Left ventricle myocardium superior (tissue), 1 donor: ENCODE measurements at regions of chr14 and their contacts with region 1.

Region 1: DNA sequence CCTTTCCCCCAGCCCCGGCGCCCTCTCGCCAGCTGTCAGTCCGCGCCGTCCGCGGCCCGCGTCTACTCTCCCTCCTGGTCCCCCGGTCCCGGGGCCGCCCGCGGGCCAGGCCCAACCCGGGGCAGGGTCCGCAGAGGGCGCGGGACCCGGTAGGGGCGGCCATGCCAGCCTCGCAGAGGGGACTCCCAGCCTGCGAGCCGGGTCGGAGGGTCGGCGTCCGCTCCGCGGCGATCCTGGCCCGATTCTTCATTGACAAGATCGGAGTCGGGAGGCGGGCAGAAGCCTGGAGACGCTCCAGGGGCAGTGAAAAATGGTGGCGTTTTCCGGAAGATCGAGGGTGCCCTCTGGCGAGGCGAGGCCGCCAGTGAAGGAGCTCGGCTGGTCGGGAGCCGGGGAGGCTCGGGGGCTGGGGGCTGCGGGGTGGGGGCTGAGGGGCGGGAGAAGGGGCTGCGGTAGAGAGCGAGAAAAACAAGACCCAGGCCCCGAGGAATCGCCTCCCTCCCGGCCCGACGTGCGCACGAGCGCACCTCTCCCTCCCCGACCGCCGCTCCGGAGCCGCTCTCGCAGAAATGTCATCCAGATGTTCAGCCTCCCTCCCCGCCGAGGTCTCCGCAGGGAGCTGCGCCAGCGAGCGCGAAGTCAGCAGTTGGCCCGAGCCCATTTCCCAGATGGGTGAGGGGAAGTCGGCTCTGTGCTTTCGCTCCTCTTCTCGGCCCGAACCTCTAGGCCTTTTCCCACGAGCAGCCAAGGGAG is 647 bp upstream of the TGFB3 start:
- DNase-seq: peak; percentile 89
- ATAC-seq: peak; percentile 75

Region 2: DNA sequence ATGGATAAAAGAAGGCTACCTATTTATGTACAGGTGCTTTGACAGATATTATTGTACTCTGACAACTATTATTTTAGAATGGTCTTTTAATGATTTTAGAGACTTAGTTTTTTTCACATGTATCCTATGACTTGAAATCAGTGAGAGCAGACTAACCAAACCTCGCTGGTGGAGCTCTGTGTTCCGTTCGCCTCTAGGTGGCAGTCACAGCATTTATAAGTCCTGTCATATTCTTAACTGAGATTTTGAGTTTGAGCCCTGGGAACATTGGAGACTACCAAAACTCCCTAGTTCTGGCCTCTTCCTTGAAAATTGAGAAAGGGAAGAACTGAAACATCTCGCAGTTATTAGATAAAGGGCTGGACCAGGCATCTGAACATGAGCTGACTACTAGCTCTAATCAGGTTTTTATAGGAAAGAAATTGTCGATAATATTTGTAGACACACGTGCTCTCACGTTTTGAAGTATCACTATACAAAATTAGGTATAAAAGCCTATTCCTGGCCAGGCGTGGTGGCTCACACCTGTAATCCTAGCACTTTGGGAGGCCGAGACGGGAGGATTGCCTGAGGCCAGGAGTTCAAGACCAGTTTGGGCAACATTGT is 273.1 kb before region 1 on chr14:
- intact Hi-C with region 1: loop called (anchors 5 kb)
- DNase-seq: peak; percentile 73
- ATAC-seq: peak; percentile 69

Region 3: DNA sequence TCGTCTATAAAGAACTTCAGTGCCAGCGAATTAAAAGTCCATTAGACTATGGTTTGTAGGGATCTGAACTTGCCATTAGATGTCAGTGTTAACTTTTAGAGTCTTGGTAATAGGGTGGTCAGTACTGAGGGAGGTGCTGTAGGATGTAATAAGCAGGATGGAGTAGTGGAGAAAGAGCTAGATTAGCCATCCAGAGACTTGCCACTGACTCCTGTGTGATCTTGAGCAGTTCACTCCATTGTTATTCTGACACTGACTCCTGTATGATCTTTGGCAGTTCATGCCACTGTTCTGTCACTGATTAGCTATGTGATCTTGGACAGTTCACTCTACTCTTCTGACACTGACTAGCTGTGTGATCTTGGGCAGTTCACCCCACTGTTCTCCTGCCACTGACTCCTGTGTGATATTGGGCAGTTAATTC is 187.8 kb before region 1 on chr14:
- intact Hi-C with region 1: loop called (anchors 10 kb)
- DNase-seq: no peak
- ATAC-seq: peak; percentile 96

Region 4: GRCh38 chr14:75906676-75907280 is 75.7 kb before region 1 on chr14:
- intact Hi-C with region 1: loop called (anchors 5 kb)
- DNase-seq: no peak
- ATAC-seq: peak; percentile 77